Cardiac septum (tissue), 1 donor: ENCODE measurements at regions of chrX and their contacts with region 1.

Region 1: DNA sequence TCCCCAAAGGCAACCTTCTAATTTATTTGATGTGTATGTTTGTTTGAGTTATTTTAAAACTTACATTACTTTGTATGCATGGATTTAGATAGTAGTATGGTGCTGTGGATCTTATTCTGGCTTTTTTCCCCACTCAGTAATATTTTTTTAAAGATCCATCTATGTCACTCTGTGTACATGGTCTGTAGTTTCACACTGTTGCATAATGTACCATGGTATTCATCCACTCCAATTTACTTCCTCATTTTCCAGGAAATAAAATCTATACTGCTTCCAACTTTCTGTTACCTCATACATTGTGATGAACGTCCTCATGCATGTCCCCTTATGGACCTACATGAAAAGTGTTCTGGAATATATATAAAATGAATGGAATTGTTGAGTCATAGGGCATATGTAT is 17.6 kb downstream of the ARMCX2 start:
- DNase-seq: no peak

Region 2: GRCh38 chrX:101655534-101655933 is 13.4 kb after region 1 on chrX:
- intact Hi-C with region 1: loop called (anchors 2 kb)
- DNase-seq: no peak